Activated CD8-positive, alpha-beta T cell treated with anti-CD3 and anti-CD28 coated beads for 36 hours (primary cell): ENCODE measurements at regions of chr1 and their contacts with region 1.

Region 1: GRCh38 chr1:23539698-23540266 is 8.7 kb upstream of the E2F2 start:
- DNase-seq: peak; percentile 98
- ATAC-seq: peak; percentile 97
- H3K4me3 Mint-ChIP-seq: peak overlapping the region; percentile 45
- H3K27ac Mint-ChIP-seq: peak overlapping the region; percentile 74
- H3K4me1 Mint-ChIP-seq: peaks cover 9% of the 10 kb centered on the region
- H3K27me3 Mint-ChIP-seq: no peaks in the 10 kb centered on the region
- CTCF ChIP-seq: peak; percentile 76

Region 2: GRCh38 chr1:23484253-23485001 is 55.4 kb before region 1 on chr1:
- CTCF ChIA-PET with region 1: interaction called, 16 read pairs
- POLR2A ChIA-PET with region 1: interaction called, 3 read pairs
- intact Hi-C with region 1: no loop called
- DNase-seq: peak; percentile 93
- ATAC-seq: peak; percentile 95
- H3K4me3 Mint-ChIP-seq: peak overlapping the region; percentile 77
- H3K27ac Mint-ChIP-seq: peak overlapping the region; percentile 77
- H3K4me1 Mint-ChIP-seq: peaks cover 14% of the 10 kb centered on the region
- H3K27me3 Mint-ChIP-seq: peaks cover 20% of the 10 kb centered on the region
- CTCF ChIP-seq: no peak

Region 3: DNA sequence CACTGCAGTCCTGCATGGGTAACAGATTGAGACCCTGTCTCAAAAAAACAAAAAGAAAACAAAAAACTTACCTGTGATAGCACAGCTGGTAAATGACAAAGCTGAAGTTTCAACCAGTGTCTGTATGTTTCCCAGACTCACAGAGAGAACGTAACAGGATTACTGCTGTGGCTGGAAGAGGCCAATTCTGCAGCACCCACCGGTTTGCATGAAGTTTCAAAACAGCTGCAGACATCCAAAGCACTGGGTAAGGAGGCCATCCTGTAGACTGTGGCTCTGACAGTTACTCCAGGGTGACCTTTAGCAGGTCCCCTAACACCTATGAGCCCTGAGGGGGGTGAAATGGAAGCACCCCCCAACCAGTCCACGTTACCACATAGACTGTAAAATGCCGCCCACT is 12.1 kb after region 1 on chr1:
- CTCF ChIA-PET with region 1: interaction called, 14 read pairs
- POLR2A ChIA-PET with region 1: interaction called, 7 read pairs
- intact Hi-C with region 1: no loop called
- DNase-seq: no peak
- ATAC-seq: no peak
- H3K4me3 Mint-ChIP-seq: no peak overlapping the region
- H3K27ac Mint-ChIP-seq: no peak overlapping the region
- H3K4me1 Mint-ChIP-seq: peaks cover 36% of the 10 kb centered on the region
- H3K27me3 Mint-ChIP-seq: no peaks in the 10 kb centered on the region
- CTCF ChIP-seq: no peak

Region 4: GRCh38 chr1:23568608-23569383 is 29.0 kb after region 1 on chr1:
- CTCF ChIA-PET with region 1: interaction called, 11 read pairs
- POLR2A ChIA-PET with region 1: no interaction called
- intact Hi-C with region 1: no loop called
- DNase-seq: no peak
- ATAC-seq: no peak
- H3K4me3 Mint-ChIP-seq: peak overlapping the region; percentile 71
- H3K27ac Mint-ChIP-seq: peak overlapping the region; percentile 70
- H3K4me1 Mint-ChIP-seq: peaks cover 9% of the 10 kb centered on the region
- H3K27me3 Mint-ChIP-seq: peaks cover 9% of the 10 kb centered on the region
- CTCF ChIP-seq: no peak

Region 5: GRCh38 chr1:23585447-23586015 is 45.7 kb after region 1 on chr1:
- CTCF ChIA-PET with region 1: no interaction called
- POLR2A ChIA-PET with region 1: no interaction called
- intact Hi-C with region 1: no loop called
- DNase-seq: no peak
- ATAC-seq: no peak
- H3K4me3 Mint-ChIP-seq: no peak overlapping the region
- H3K27ac Mint-ChIP-seq: no peak overlapping the region
- H3K4me1 Mint-ChIP-seq: peaks cover 30% of the 10 kb centered on the region
- H3K27me3 Mint-ChIP-seq: no peaks in the 10 kb centered on the region
- CTCF ChIP-seq: no peak

Region 6: GRCh38 chr1:23619299-23620188 is 79.8 kb after region 1 on chr1:
- CTCF ChIA-PET with region 1: interaction called, 12 read pairs
- POLR2A ChIA-PET with region 1: interaction called, 3 read pairs
- intact Hi-C with region 1: no loop called
- DNase-seq: peak; percentile 91
- ATAC-seq: peak; percentile 72
- H3K4me3 Mint-ChIP-seq: peak overlapping the region; percentile 68
- H3K27ac Mint-ChIP-seq: peak overlapping the region; percentile 82
- H3K4me1 Mint-ChIP-seq: peaks cover 81% of the 10 kb centered on the region
- H3K27me3 Mint-ChIP-seq: no peaks in the 10 kb centered on the region
- CTCF ChIP-seq: no peak

Region 7: GRCh38 chr1:23657659-23658275 is 118.0 kb after region 1 on chr1:
- CTCF ChIA-PET with region 1: interaction called, 14 read pairs
- POLR2A ChIA-PET with region 1: no interaction called
- intact Hi-C with region 1: no loop called
- DNase-seq: peak; percentile 74
- ATAC-seq: peak; percentile 92
- H3K4me3 Mint-ChIP-seq: no peak overlapping the region
- H3K27ac Mint-ChIP-seq: no peak overlapping the region
- H3K4me1 Mint-ChIP-seq: no peaks in the 10 kb centered on the region
- H3K27me3 Mint-ChIP-seq: no peaks in the 10 kb centered on the region
- CTCF ChIP-seq: peak; percentile 89